Thyroid gland (tissue), 4 donors: ENCODE measurements at regions of chr19 and their contacts with region 1.

Region 1: DNA sequence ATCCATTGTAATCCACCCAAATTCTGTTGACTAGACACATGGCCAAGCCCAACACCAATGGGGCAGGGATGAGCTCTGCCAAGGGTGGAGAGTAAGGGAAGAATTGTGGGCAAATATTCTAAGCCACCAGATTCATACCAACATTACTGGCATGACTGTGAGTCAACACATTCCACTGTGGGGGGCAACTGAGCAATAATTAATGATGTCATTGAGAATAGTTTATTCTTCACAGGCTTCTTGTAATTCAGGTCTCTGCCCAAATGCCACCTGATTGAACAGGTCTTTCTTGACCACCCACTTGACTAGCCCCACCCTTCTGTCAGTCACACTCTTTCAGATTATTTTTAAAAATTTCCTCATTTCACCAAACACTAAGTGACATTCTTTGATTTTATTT is 28.5 kb downstream of the ZNF283 start:
- DNase-seq: no peak
- H3K4me3 ChIP-seq: no peak overlapping the region
- H3K27ac ChIP-seq: no peak overlapping the region
- H3K4me1 ChIP-seq: no peaks in the 10 kb centered on the region
- H3K27me3 ChIP-seq: no peaks in the 10 kb centered on the region
- CTCF ChIP-seq: no peak
- POLR2A ChIP-seq: no peak

Region 2: GRCh38 chr19:43895727-43896126 is 40.1 kb after region 1 on chr19:
- intact Hi-C with region 1: no loop called
- DNase-seq: no peak
- H3K4me3 ChIP-seq: no peak overlapping the region
- H3K27ac ChIP-seq: no peak overlapping the region
- H3K4me1 ChIP-seq: no peaks in the 10 kb centered on the region
- H3K27me3 ChIP-seq: no peaks in the 10 kb centered on the region
- CTCF ChIP-seq: no peak
- POLR2A ChIP-seq: no peak

Region 3: DNA sequence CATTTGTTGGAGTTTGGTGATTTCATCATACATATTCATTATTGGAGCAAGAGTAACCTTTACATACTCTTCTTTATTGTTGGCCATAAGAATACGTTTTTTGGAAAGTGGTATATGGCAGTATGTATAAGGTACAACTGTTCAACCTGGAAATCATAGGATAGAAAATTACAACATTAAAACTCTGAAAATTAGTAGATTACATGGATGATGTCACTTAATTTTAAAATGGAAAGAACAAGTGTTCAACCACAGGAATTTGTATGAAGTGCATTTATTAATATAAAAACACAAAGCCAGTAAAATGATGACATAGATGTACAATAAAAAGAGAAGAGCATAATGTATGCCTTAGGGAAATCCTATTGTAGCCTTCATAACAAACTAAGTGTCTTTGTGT is 121.1 kb after region 1 on chr19:
- intact Hi-C with region 1: loop called (anchors 10 kb)
- DNase-seq: no peak
- H3K4me3 ChIP-seq: no peak overlapping the region
- H3K27ac ChIP-seq: no peak overlapping the region
- H3K4me1 ChIP-seq: no peaks in the 10 kb centered on the region
- H3K27me3 ChIP-seq: no peaks in the 10 kb centered on the region
- CTCF ChIP-seq: no peak
- POLR2A ChIP-seq: no peak

Region 4: DNA sequence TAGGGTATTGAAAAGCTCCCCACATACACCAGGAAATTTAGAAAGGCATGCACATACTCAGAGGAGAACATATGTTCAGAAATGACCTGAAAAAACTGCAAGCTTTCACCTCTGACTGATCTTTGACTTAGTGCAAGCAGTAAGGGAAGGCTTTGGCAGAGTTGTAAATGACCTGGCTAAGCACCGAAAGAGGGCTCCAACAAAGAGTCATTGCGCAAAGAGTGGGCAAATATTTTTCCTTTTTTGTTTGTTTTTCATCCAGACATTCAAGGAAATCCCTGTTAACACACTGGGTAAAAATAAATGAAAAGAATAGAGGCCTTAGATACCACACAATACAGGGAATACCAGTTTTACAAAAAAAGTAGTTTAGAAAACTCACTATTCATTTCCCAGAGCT is 398.9 kb after region 1 on chr19:
- intact Hi-C with region 1: loop called (anchors 10 kb)
- DNase-seq: no peak
- H3K4me3 ChIP-seq: no peak overlapping the region
- H3K27ac ChIP-seq: no peak overlapping the region
- H3K4me1 ChIP-seq: no peaks in the 10 kb centered on the region
- H3K27me3 ChIP-seq: no peaks in the 10 kb centered on the region
- CTCF ChIP-seq: no peak
- POLR2A ChIP-seq: no peak

Region 5: GRCh38 chr19:44476559-44477408 is 621.2 kb after region 1 on chr19:
- intact Hi-C with region 1: loop called (anchors 10 kb)
- DNase-seq: no peak
- H3K4me3 ChIP-seq: no peak overlapping the region
- H3K27ac ChIP-seq: no peak overlapping the region
- H3K4me1 ChIP-seq: no peaks in the 10 kb centered on the region
- H3K27me3 ChIP-seq: no peaks in the 10 kb centered on the region
- CTCF ChIP-seq: no peak
- POLR2A ChIP-seq: no peak